ENCODE measurements at regions of chr7 and their contacts with region 1.

Region 1: GRCh38 chr7:106870983-106871410 is 5.9 kb downstream of the PIK3CG start:
- DNase-seq: peak; percentile 84
- H3K4me3 ChIP-seq: peak overlapping the region; percentile 65
- H3K27ac ChIP-seq: peak overlapping the region; percentile 79
- H3K4me1 ChIP-seq: peaks cover 64% of the 10 kb centered on the region
- CTCF ChIP-seq: no peak

Region 2: DNA sequence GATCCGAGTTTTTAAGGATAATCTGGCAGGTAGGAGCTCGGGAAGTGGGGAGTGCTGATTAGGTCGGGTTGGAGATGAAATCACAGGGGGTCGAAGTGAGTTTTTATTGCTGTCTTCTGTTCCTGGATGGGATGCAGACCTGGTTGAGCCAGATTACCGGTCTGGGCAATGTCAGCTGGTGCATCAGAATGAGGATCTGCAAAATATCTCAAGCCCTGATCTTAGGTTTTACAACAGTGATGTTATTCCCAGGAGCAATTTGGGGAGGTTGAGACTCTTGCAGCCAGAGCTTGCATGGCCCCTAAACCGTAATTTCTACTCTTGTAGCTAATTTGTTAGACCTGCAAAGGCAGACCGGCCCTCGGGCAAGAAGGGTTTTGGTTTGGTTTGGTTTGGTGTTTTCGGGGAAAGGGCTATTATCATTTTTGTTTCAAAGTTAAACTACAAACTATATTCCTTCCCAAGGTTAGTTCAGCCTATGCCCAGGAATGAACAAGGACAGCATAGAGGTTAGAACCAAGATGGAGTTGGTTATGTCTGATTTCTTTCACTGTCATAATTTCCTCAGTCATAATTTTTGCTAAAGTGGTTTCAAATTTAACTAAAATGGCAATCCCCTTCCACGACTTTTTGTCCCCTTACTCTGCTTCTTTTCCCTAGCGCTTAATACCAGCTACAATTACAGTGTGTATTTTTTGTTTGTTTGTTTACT is 26.6 kb before region 1 on chr7:
- CTCF ChIA-PET with region 1: no interaction called
- POLR2A ChIA-PET with region 1: no interaction called
- intact Hi-C with region 1: no loop called
- DNase-seq: no peak
- H3K4me3 ChIP-seq: no peak overlapping the region
- H3K27ac ChIP-seq: no peak overlapping the region
- H3K4me1 ChIP-seq: no peaks in the 10 kb centered on the region
- CTCF ChIP-seq: no peak

Region 3: GRCh38 chr7:106858618-106859532 is 12.1 kb before region 1 on chr7:
- CTCF ChIA-PET with region 1: no interaction called
- POLR2A ChIA-PET with region 1: interaction called, 12 read pairs
- intact Hi-C with region 1: no loop called
- DNase-seq: no peak
- H3K4me3 ChIP-seq: no peak overlapping the region
- H3K27ac ChIP-seq: no peak overlapping the region
- H3K4me1 ChIP-seq: peaks cover 10% of the 10 kb centered on the region
- CTCF ChIP-seq: no peak

Region 4: GRCh38 chr7:106895246-106895864 is 24.4 kb after region 1 on chr7:
- CTCF ChIA-PET with region 1: no interaction called
- POLR2A ChIA-PET with region 1: interaction called, 5 read pairs
- intact Hi-C with region 1: loop called (anchors 1 kb)
- DNase-seq: peak; percentile 93
- H3K4me3 ChIP-seq: peak overlapping the region; percentile 12
- H3K27ac ChIP-seq: peak overlapping the region; percentile 74
- H3K4me1 ChIP-seq: peaks cover 43% of the 10 kb centered on the region
- CTCF ChIP-seq: peak; percentile 20; the same call in 1 of the 2 replicates

Region 5: GRCh38 chr7:107103363-107103762 is 232.4 kb after region 1 on chr7:
- CTCF ChIA-PET with region 1: no interaction called
- POLR2A ChIA-PET with region 1: no interaction called
- intact Hi-C with region 1: no loop called
- DNase-seq: peak; percentile 74
- H3K4me3 ChIP-seq: peak overlapping the region; percentile 13
- H3K27ac ChIP-seq: peak overlapping the region; percentile 50
- H3K4me1 ChIP-seq: peaks cover 61% of the 10 kb centered on the region
- CTCF ChIP-seq: no peak

Measured in OCI-LY7 (cell line).